IMR-90 (cell line): ENCODE measurements at regions of chr12 and their contacts with region 1.

Region 1: GRCh38 chr12:4630262-4630661 is 18.6 kb downstream of the AKAP3 start:
- DNase-seq: no peak
- ATAC-seq: no peak
- H3K4me3 ChIP-seq: no peak overlapping the region
- H3K27ac ChIP-seq: no peak overlapping the region
- H3K4me1 ChIP-seq: no peaks in the 10 kb centered on the region
- H3K27me3 ChIP-seq: peaks cover 3% of the 10 kb centered on the region; the same call in 1 of the 2 replicates
- CTCF ChIP-seq: no peak
- POLR2A ChIP-seq: no peak
- RAD21 ChIP-seq: no peak

Region 2: GRCh38 chr12:4681732-4682131 is 51.5 kb after region 1 on chr12:
- CTCF ChIA-PET with region 1: interaction called, 6 read pairs
- POLR2A ChIA-PET with region 1: no interaction called
- dilution Hi-C with region 1: no loop called
- in situ Hi-C with region 1: no loop called
- intact Hi-C with region 1: loop called (anchors 1 kb)
- DNase-seq: no peak
- ATAC-seq: no peak
- H3K4me3 ChIP-seq: no peak overlapping the region
- H3K27ac ChIP-seq: no peak overlapping the region
- H3K4me1 ChIP-seq: no peaks in the 10 kb centered on the region
- H3K27me3 ChIP-seq: no peaks in the 10 kb centered on the region
- CTCF ChIP-seq: no peak
- POLR2A ChIP-seq: no peak
- RAD21 ChIP-seq: no peak

Region 3: DNA sequence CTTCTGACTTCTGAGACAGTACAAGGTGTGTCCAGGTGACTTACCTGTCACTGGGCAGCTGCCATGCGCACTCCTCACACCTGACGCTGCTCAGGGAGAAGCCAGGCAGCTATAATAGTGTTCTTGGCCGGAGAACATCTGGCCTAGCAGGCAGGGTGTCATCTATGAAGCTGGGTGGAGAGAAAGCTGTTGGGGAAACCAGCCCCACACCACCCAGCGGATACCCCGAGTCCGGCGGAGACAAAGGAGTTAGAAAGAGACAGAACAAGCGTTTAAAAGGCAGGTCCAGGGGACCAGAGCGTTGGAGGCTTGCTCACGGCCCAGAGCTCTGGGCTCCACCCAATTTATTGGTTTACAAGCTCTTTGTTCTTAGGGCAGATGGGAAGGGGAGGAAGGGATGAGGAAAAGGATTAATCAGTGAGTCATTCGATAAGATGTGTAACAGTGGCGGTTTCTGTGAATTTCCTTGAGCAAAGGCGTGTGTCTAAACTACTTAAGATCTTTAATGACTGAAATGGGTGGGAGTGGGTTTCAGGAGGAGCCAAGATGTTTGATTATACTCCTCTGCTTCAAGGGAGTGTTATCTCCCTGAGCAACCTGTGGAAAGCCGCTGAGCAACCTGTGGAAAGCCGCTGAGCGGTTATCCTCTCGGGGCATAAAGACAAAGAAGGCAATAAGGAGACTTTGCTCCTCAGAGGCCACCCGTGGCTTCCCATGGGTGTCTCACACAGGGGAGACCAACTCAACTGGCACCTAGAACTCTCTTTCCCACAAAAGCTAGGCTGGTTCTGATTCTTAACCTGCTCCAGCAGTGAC is 89.8 kb after region 1 on chr12 and contains the start of gene GALNT8:
- CTCF ChIA-PET with region 1: no interaction called
- POLR2A ChIA-PET with region 1: no interaction called
- dilution Hi-C with region 1: no loop called
- in situ Hi-C with region 1: no loop called
- intact Hi-C with region 1: no loop called
- DNase-seq: no peak
- ATAC-seq: no peak
- H3K4me3 ChIP-seq: no peak within 1 kb of the TSS
- H3K27ac ChIP-seq: no peak within 1 kb of the TSS
- H3K4me1 ChIP-seq: no peaks in the 10 kb centered on the region
- H3K27me3 ChIP-seq: peaks cover 10% of the 10 kb centered on the region
- CTCF ChIP-seq: no peak
- POLR2A ChIP-seq: no peak
- RAD21 ChIP-seq: no peak
- total RNA-seq, gene GALNT8: not detected in 2 replicates